ENCODE measurements at regions of chr17 and their contacts with region 1.

Region 1: GRCh38 chr17:40362696-40363110 is 1.8 kb downstream of the GJD3 start:
- DNase-seq: peak; percentile 55 to 82 (median 77)
- ATAC-seq: peak; percentile 79
- H3K4me3 ChIP-seq: peak overlapping the region in 1 of 2 experiments; percentile 20
- H3K4me3 Mint-ChIP-seq: peak overlapping the region; percentile 78
- H3K27ac ChIP-seq: no peak overlapping the region
- H3K27ac Mint-ChIP-seq: no peak overlapping the region
- H3K4me1 ChIP-seq: peaks cover 15% of the 10 kb centered on the region
- H3K4me1 Mint-ChIP-seq: peaks cover 10% of the 10 kb centered on the region
- H3K27me3 ChIP-seq: peaks cover 0 to 6% of the 10 kb centered on the region in 2 experiments
- H3K27me3 Mint-ChIP-seq: peaks cover 6% of the 10 kb centered on the region
- CTCF ChIP-seq: peak; percentile 62

Region 2: DNA sequence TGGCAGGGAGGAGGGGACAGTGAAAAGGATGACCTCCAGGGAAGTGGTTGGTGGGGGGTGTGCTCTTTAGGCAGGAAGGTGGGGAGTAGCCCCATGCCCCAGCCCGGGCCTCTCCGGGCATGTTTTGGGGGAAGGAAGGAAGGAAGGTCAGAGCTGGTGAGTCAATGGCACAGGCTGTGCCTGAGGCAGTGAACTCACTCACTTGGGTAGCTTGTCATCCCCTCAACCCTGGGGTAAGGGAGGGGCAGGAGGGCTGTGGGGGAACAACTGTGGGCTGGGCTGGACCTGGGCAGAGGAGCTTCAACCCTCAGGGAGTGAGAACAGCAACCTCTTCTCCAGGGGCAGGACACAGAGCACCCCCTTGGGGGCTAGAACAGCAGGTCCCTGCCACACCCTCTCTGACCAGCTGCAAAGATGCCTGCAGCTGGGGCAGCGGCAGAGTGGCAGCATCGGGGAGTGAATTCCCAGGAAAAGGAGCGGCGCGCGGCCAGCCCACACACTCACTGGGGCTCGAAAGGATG is 341.2 kb before region 1 on chr17:
- CTCF ChIA-PET with region 1: no interaction called
- POLR2A ChIA-PET with region 1: no interaction called
- intact Hi-C with region 1: loop called in 1 of 2 experiments (anchors 10 kb)
- DNase-seq: no peak
- ATAC-seq: no peak
- H3K4me3 ChIP-seq: no peak overlapping the region
- H3K4me3 Mint-ChIP-seq: no peak overlapping the region
- H3K27ac ChIP-seq: no peak overlapping the region
- H3K27ac Mint-ChIP-seq: no peak overlapping the region
- H3K4me1 ChIP-seq: peaks cover 14% of the 10 kb centered on the region
- H3K4me1 Mint-ChIP-seq: peaks cover 14% of the 10 kb centered on the region
- H3K27me3 ChIP-seq: no peaks in the 10 kb centered on the region
- H3K27me3 Mint-ChIP-seq: no peaks in the 10 kb centered on the region
- CTCF ChIP-seq: no peak

Region 3: DNA sequence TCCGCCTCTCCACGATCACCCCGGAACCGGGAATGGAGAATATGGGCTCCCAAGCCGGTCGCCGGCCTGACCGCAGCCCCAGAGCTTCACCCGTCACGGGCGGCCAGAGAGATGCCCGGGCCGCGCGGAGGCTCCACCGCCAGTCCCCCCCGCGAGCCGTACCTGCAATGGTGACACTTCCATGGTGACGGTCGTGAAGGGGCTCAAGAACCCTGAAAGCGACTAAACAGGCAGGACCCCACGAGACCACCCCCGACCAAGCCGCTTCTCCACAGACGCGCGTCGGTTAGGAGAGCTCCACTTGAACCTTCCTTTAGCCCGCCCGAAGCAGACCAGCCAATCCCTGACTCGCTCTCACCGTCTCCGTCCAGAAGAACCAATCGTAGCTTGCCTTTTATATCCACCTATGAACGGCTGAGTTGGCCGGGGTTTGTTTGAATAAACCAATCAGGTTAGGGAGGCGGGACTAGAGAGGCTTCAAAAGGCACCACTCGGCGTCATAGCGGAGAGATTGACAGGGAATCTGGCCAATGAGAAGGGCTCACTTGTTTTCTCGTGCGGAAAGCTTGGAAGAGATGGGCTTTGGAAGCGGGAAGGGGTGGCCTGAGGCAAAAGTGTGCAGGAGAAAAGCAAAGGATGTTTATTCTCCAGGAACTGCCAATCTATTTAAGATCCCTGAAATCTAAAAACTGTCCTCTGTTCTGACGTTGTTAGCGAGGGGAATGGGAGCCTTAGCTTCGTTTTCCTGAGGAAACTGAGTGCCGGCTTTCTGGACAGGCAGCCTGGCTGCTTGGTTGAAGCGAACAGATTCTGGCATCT is 55.1 kb after region 1 on chr17 and contains the start of gene TOP2A:
- CTCF ChIA-PET with region 1: interaction called, 33 read pairs
- POLR2A ChIA-PET with region 1: interaction called, 3 read pairs
- intact Hi-C with region 1: loop called (anchors 1 to 2 kb)
- DNase-seq: peak; percentile 90 to 99 (median 95)
- ATAC-seq: peak; percentile 99
- H3K4me3 ChIP-seq: peak within 1 kb of the TSS; percentile 75
- H3K4me3 Mint-ChIP-seq: peak within 1 kb of the TSS; percentile 92
- H3K27ac ChIP-seq: peak within 1 kb of the TSS; percentile 42 to 49
- H3K27ac Mint-ChIP-seq: peak within 1 kb of the TSS; percentile 91
- H3K4me1 ChIP-seq: peaks cover 6% of the 10 kb centered on the region
- H3K4me1 Mint-ChIP-seq: peaks cover 17% of the 10 kb centered on the region
- H3K27me3 ChIP-seq: no peaks in the 10 kb centered on the region
- H3K27me3 Mint-ChIP-seq: peaks cover 3% of the 10 kb centered on the region
- CTCF ChIP-seq: no peak
- total RNA-seq, gene TOP2A: 2.9 TPM

Region 4: GRCh38 chr17:40536295-40537171 is 173.8 kb after region 1 on chr17:
- CTCF ChIA-PET with region 1: interaction called, 63 read pairs
- POLR2A ChIA-PET with region 1: interaction called, 6 read pairs
- intact Hi-C with region 1: loop called (anchors 1 kb)
- DNase-seq: peak in 1 of 9 experiments; percentile 38
- ATAC-seq: no peak
- H3K4me3 ChIP-seq: no peak overlapping the region
- H3K4me3 Mint-ChIP-seq: no peak overlapping the region
- H3K27ac ChIP-seq: no peak overlapping the region
- H3K27ac Mint-ChIP-seq: peak overlapping the region; percentile 85
- H3K4me1 ChIP-seq: peaks cover 88% of the 10 kb centered on the region
- H3K4me1 Mint-ChIP-seq: peaks cover 96% of the 10 kb centered on the region
- H3K27me3 ChIP-seq: no peaks in the 10 kb centered on the region
- H3K27me3 Mint-ChIP-seq: no peaks in the 10 kb centered on the region
- CTCF ChIP-seq: no peak

Region 5: GRCh38 chr17:40622509-40622928 is 259.8 kb after region 1 on chr17:
- CTCF ChIA-PET with region 1: interaction called, 3 read pairs
- POLR2A ChIA-PET with region 1: no interaction called
- intact Hi-C with region 1: loop called in 1 of 2 experiments (anchors 5 kb)
- DNase-seq: peak in 4 of 9 experiments; percentile 32 to 80 (median 62)
- ATAC-seq: peak; percentile 74
- H3K4me3 ChIP-seq: peak overlapping the region in 1 of 2 experiments; percentile 6
- H3K4me3 Mint-ChIP-seq: peak overlapping the region; percentile 54
- H3K27ac ChIP-seq: peak overlapping the region; percentile 2 to 4
- H3K27ac Mint-ChIP-seq: peak overlapping the region; percentile 89
- H3K4me1 ChIP-seq: peaks cover 53% of the 10 kb centered on the region
- H3K4me1 Mint-ChIP-seq: peaks cover 53% of the 10 kb centered on the region
- H3K27me3 ChIP-seq: no peaks in the 10 kb centered on the region
- H3K27me3 Mint-ChIP-seq: no peaks in the 10 kb centered on the region
- CTCF ChIP-seq: no peak

Region 6: GRCh38 chr17:40686192-40686591 is 323.5 kb after region 1 on chr17:
- CTCF ChIA-PET with region 1: no interaction called
- POLR2A ChIA-PET with region 1: no interaction called
- intact Hi-C with region 1: no loop called
- DNase-seq: no peak
- ATAC-seq: no peak
- H3K4me3 ChIP-seq: no peak overlapping the region
- H3K4me3 Mint-ChIP-seq: no peak overlapping the region
- H3K27ac ChIP-seq: no peak overlapping the region
- H3K27ac Mint-ChIP-seq: no peak overlapping the region
- H3K4me1 ChIP-seq: no peaks in the 10 kb centered on the region
- H3K4me1 Mint-ChIP-seq: no peaks in the 10 kb centered on the region
- H3K27me3 ChIP-seq: no peaks in the 10 kb centered on the region
- H3K27me3 Mint-ChIP-seq: peaks cover 17% of the 10 kb centered on the region
- CTCF ChIP-seq: no peak

Region 7: GRCh38 chr17:40791787-40792436 is 429.2 kb after region 1 on chr17:
- CTCF ChIA-PET with region 1: no interaction called
- POLR2A ChIA-PET with region 1: no interaction called
- intact Hi-C with region 1: loop called in 1 of 2 experiments (anchors 5 kb)
- DNase-seq: peak in 1 of 9 experiments; percentile 28
- ATAC-seq: no peak
- H3K4me3 ChIP-seq: no peak overlapping the region
- H3K4me3 Mint-ChIP-seq: no peak overlapping the region
- H3K27ac ChIP-seq: no peak overlapping the region
- H3K27ac Mint-ChIP-seq: no peak overlapping the region
- H3K4me1 ChIP-seq: no peaks in the 10 kb centered on the region
- H3K4me1 Mint-ChIP-seq: no peaks in the 10 kb centered on the region
- H3K27me3 ChIP-seq: peaks cover 0 to 2% of the 10 kb centered on the region in 2 experiments
- H3K27me3 Mint-ChIP-seq: peaks cover 29% of the 10 kb centered on the region
- CTCF ChIP-seq: peak; percentile 31

Measured in CD8-positive, alpha-beta T cell (primary cell).